ENCODE measurements at regions of chr19 and their contacts with region 1.

Region 1: GRCh38 chr19:53730390-53730789 is 93.7 kb downstream of the NLRP12 start:
- ATAC-seq: no peak
- H3K4me3 ChIP-seq: no peak overlapping the region
- H3K27ac ChIP-seq: no peak overlapping the region
- H3K4me1 ChIP-seq: no peaks in the 10 kb centered on the region

Region 2: DNA sequence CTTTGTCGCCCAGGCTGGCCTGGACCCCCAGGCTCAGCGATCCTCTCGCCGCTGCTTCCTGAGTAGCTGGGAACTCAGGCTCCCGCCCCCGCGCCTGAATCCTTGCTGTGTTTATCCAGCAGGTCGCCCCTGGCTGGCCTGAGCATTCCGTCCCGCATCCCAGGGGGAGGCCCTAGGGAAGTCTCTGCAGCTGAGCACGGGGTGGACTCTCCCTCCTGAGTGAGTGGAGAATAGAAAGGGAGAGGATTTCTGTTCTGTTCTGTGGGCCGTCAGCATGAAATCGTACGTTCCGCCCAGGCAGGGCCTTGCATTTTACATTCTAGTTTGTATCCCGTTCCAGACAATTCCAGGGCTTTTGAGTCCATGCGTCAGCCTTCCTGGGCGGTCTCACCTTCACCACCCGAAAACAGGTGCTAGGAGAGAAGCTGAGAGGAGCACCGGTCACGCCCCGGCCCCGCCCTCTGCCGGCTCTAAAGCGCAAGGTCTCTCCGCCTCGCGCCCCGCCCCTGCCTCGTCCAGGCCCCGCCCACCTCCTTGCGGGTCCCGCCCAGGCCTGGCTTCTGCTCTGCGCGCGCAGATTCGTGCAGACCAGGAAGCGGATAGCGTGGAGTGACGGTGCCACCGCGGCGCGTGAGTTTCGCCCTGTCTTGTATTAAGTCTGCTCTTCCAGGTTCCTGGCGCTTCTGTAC is 298.8 kb before region 1 on chr19 and contains the start of gene ZNF761:
- in situ Hi-C with region 1: loop called in 1 of 9 experiments (anchors 25 kb)
- ATAC-seq: peak; percentile 94 to 99 (median 96)
- H3K4me3 ChIP-seq: peak within 1 kb of the TSS; percentile 41 to 91 (median 74)
- H3K27ac ChIP-seq: peak within 1 kb of the TSS; percentile 36 to 77
- H3K4me1 ChIP-seq: peaks cover 0 to 8% of the 10 kb centered on the region in 2 donors
- total RNA-seq, gene ZNF761: 5.6 to 12.8 (median 9.2) TPM

Measured in motor neuron (in vitro differentiated cells).